ENCODE measurements at regions of chr3 and their contacts with region 1.

Region 1: GRCh38 chr3:156694536-156694935 is 20.1 kb downstream of the TIPARP start:
- DNase-seq: no peak
- H3K4me3 ChIP-seq: no peak overlapping the region
- H3K27ac ChIP-seq: no peak overlapping the region
- H3K4me1 ChIP-seq: peaks cover 25% of the 10 kb centered on the region
- H3K27me3 ChIP-seq: no peaks in the 10 kb centered on the region
- CTCF ChIP-seq: no peak
- POLR2A ChIP-seq: no peak

Region 2: DNA sequence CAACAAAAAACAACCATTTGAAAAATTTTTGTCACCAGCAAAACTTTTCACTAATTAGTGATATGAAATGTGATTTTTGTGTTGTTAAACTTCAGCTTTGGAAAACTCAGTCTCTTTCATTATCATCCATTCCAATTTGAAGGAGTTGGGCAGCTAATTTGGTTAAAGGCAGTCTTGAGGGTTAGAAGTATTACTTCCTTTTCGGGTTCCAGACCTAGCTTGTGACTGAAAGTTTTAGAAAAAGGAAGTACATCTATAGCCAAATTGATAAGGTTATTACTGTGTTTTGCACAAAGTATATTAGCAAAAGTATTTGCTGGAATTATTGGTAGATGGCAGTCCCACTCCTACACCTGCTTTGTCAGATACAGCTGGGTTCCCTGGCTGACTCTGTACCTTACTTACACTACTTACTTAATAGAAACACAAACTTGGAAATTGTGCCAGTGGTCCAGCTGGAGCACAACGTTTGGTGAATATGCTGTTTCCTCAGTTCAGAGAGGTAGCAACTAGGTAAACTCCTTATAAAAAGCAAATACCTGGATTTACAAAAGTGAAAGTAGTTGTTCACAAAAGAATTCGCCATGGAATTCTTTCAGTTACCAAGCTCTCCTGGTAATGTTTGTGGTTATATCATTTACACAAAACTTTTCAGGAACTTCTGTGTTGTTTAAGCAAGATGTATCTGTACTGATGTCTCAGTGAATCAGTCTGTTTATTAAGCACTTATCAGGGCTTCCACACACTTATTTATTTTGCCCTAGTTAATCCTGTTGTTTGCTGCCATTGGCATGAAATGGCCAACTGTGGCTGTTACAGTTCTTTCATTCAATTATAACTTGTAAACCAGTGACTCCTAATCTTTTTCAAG is 11.5 kb after region 1 on chr3:
- intact Hi-C with region 1: loop called (anchors 2 kb)
- DNase-seq: no peak
- H3K4me3 ChIP-seq: no peak overlapping the region
- H3K27ac ChIP-seq: no peak overlapping the region
- H3K4me1 ChIP-seq: peaks cover 5% of the 10 kb centered on the region
- H3K27me3 ChIP-seq: no peaks in the 10 kb centered on the region
- CTCF ChIP-seq: no peak
- POLR2A ChIP-seq: no peak

Region 3: DNA sequence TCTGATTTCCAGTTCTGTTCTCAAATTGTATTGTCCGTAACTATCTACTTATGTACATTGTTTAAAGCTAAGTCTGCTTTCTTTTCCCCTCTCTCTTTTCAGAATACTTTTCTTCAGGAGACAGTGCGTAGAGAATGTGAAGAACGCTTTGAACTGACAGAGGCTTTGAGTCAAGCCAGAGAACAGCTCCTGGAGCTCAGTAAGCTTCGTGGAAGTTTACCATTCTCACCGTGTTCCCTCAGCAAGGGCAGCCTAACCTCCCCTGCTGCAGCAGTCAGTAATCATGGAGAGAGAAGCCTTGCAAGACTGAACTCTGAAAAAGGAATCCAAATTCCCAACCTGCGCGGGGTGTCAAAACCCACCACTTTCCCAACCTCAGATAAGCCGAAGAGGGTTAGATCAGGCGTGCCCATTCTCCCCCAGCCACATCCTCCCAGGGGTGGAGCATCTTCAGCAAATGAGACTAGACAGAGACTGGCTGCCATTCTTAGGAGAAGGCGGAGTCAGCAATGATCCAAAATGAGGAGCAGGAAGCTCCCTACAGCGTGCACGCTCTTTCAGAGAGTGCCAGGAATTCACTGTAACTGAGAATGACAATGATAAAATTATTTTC is 350.8 kb after region 1 on chr3:
- intact Hi-C with region 1: no loop called
- DNase-seq: no peak
- H3K4me3 ChIP-seq: no peak overlapping the region
- H3K27ac ChIP-seq: no peak overlapping the region
- H3K4me1 ChIP-seq: no peaks in the 10 kb centered on the region
- H3K27me3 ChIP-seq: no peaks in the 10 kb centered on the region
- CTCF ChIP-seq: no peak
- POLR2A ChIP-seq: no peak

Measured in vagina (tissue), 2 donors.